ENCODE measurements at regions of chr20 and their contacts with region 1.

Region 1: GRCh38 chr20:50713657-50714101 is 17.7 kb upstream of the PARD6B start:
- DNase-seq: peak in 4 of 5 donors; percentile 40 to 58 (median 54)
- H3K4me3 ChIP-seq: no peak overlapping the region
- H3K27ac ChIP-seq: no peak overlapping the region
- H3K4me1 ChIP-seq: no peaks in the 10 kb centered on the region
- H3K27me3 ChIP-seq: no peaks in the 10 kb centered on the region
- CTCF ChIP-seq: peak in 2 of 3 donors; percentile 32 to 33
- EP300 ChIP-seq: no peak
- POLR2A ChIP-seq: no peak

Region 2: DNA sequence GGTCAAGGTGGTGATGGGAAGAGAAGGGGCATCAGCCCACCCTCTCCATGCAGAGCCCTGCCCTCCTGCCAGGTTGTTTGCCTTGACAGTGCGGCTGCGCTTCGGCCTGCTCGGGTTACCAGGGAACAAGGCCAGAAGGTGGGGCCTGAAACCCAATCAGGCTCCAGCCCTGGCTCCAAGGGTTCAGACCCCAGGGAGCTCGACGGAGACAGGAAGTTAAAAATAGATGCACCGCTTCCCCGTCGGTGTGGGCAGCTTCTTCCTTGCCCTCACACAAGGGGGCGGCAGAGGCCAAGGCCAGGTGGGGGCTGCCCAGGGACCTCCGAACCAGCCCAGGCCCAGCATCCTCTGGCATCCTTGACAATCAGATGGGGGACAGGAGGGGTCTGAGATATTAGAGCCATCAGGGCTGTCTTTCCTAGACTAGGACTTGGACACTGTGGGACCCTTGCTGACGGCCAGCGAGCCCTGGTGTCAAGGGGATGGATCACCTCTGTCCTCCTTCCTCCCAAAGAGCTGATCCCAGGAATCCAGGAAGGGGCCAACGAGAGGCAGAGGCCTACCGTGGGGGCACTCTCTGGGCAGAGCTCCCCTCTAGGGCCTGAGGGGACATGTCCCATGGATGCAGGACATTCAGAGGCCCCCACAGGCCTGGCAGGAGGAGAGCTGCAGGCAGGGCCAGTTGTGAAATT is 87.5 kb before region 1 on chr20:
- intact Hi-C with region 1: loop called in 2 of 4 experiments (anchors 10 kb)
- DNase-seq: peak; percentile 73 to 84 (median 75)
- H3K4me3 ChIP-seq: no peak overlapping the region
- H3K27ac ChIP-seq: peak overlapping the region in 1 of 2 donors; percentile 40
- H3K4me1 ChIP-seq: peaks cover 7% of the 10 kb centered on the region
- H3K27me3 ChIP-seq: no peaks in the 10 kb centered on the region
- CTCF ChIP-seq: peak; percentile 33 to 66 (median 66)
- EP300 ChIP-seq: no peak
- POLR2A ChIP-seq: no peak

Region 3: DNA sequence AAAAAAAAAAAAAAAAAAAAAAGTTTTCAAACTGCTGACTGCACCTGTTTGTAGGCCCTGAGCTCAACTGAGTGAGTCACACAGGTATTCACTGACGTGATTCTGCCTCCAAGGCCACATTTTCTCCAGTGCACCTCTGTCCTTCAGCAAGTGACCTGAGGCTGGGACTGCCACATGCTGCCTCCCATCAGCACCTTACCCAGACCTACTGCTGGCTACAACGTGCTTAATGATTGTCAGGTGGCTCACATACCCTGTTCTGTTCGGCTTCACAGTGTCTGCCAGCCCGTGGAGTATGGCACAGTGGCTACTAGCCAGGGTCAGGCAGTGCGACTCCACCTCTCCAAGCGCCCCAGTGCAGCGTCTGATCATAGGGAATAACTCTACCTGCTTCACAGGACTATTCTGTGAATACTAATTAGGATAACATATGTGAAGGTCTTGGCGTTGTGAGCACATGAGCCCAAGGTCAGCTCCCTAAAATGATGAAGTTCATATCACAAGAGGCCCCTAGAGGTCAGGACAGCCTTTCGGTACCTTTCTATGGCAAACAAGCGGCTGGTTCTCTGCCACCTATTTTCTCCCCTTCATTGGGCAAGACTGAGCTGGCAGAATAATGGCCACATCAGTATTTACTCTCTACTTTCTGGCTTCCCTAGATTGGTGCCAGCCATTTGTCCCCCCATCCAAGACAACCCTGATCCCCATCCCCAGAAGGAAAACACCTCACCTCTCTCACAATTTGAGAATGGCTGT is 50.4 kb before region 1 on chr20:
- intact Hi-C with region 1: loop called in 1 of 4 experiments (anchors 10 kb)
- DNase-seq: no peak
- H3K4me3 ChIP-seq: no peak overlapping the region
- H3K27ac ChIP-seq: no peak overlapping the region
- H3K4me1 ChIP-seq: peaks cover 24% of the 10 kb centered on the region
- H3K27me3 ChIP-seq: no peaks in the 10 kb centered on the region
- CTCF ChIP-seq: no peak
- EP300 ChIP-seq: no peak
- POLR2A ChIP-seq: no peak

Region 4: GRCh38 chr20:50837532-50838506 is 124.1 kb after region 1 on chr20:
- intact Hi-C with region 1: no loop called
- DNase-seq: peak in 3 of 5 donors; percentile 36 to 56 (median 45)
- H3K4me3 ChIP-seq: no peak overlapping the region
- H3K27ac ChIP-seq: no peak overlapping the region
- H3K4me1 ChIP-seq: peaks cover 1% of the 10 kb centered on the region
- H3K27me3 ChIP-seq: no peaks in the 10 kb centered on the region
- CTCF ChIP-seq: no peak
- EP300 ChIP-seq: no peak
- POLR2A ChIP-seq: no peak